ENCODE measurements at regions of chr6 and their contacts with region 1.

Region 1: GRCh38 chr6:132512638-132513632 is at the start of gene STX7:
- DNase-seq: peak; percentile 67 to 91 (median 85)
- ATAC-seq: peak; percentile 93
- H3K4me3 ChIP-seq: peak within 1 kb of the TSS; percentile 75 to 90
- H3K4me3 Mint-ChIP-seq: peak within 1 kb of the TSS; percentile 97
- H3K27ac ChIP-seq: peak within 1 kb of the TSS; percentile 43 to 57
- H3K27ac Mint-ChIP-seq: peak within 1 kb of the TSS; percentile 91
- H3K4me1 ChIP-seq: peaks cover 8% of the 10 kb centered on the region
- H3K4me1 Mint-ChIP-seq: peaks cover 35% of the 10 kb centered on the region
- H3K27me3 ChIP-seq: no peaks in the 10 kb centered on the region
- H3K27me3 Mint-ChIP-seq: no peaks in the 10 kb centered on the region
- CTCF ChIP-seq: no peak
- total RNA-seq, gene STX7: 5.4 to 5.5 TPM

Region 2: GRCh38 chr6:132495604-132496079 is 17.3 kb before region 1 on chr6:
- CTCF ChIA-PET with region 1: no interaction called
- POLR2A ChIA-PET with region 1: interaction called, 3 read pairs
- intact Hi-C with region 1: loop called in 1 of 2 experiments (anchors 1 kb)
- DNase-seq: no peak
- ATAC-seq: no peak
- H3K4me3 ChIP-seq: no peak overlapping the region
- H3K4me3 Mint-ChIP-seq: no peak overlapping the region
- H3K27ac ChIP-seq: peak overlapping the region in 1 of 2 experiments; percentile 21
- H3K27ac Mint-ChIP-seq: no peak overlapping the region
- H3K4me1 ChIP-seq: peaks cover 1% of the 10 kb centered on the region
- H3K4me1 Mint-ChIP-seq: peaks cover 41% of the 10 kb centered on the region
- H3K27me3 ChIP-seq: no peaks in the 10 kb centered on the region
- H3K27me3 Mint-ChIP-seq: no peaks in the 10 kb centered on the region
- CTCF ChIP-seq: no peak

Region 3: DNA sequence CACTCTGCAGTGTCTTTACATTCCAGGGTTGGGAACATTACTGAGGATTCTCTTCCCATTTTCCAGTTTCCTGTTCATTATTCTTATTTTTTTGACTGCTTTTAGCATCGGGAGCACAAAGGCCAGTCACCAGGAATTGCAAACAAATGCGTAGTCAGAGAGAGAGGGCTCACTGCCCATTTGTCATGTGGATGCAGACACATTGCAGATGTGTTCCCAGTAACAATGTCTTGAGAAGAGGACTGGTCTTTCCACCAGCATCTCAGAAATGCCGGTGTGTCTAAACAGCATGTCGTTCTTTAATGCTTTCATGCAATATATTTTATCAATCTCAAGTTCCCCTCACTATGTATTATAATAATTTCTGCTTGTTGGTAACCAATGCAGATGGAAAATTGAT is 56.2 kb after region 1 on chr6:
- CTCF ChIA-PET with region 1: no interaction called
- POLR2A ChIA-PET with region 1: no interaction called
- intact Hi-C with region 1: no loop called
- DNase-seq: no peak
- ATAC-seq: no peak
- H3K4me3 ChIP-seq: no peak overlapping the region
- H3K4me3 Mint-ChIP-seq: no peak overlapping the region
- H3K27ac ChIP-seq: no peak overlapping the region
- H3K27ac Mint-ChIP-seq: no peak overlapping the region
- H3K4me1 ChIP-seq: no peaks in the 10 kb centered on the region
- H3K4me1 Mint-ChIP-seq: no peaks in the 10 kb centered on the region
- H3K27me3 ChIP-seq: no peaks in the 10 kb centered on the region
- H3K27me3 Mint-ChIP-seq: peaks cover 26% of the 10 kb centered on the region
- CTCF ChIP-seq: no peak

Region 4: DNA sequence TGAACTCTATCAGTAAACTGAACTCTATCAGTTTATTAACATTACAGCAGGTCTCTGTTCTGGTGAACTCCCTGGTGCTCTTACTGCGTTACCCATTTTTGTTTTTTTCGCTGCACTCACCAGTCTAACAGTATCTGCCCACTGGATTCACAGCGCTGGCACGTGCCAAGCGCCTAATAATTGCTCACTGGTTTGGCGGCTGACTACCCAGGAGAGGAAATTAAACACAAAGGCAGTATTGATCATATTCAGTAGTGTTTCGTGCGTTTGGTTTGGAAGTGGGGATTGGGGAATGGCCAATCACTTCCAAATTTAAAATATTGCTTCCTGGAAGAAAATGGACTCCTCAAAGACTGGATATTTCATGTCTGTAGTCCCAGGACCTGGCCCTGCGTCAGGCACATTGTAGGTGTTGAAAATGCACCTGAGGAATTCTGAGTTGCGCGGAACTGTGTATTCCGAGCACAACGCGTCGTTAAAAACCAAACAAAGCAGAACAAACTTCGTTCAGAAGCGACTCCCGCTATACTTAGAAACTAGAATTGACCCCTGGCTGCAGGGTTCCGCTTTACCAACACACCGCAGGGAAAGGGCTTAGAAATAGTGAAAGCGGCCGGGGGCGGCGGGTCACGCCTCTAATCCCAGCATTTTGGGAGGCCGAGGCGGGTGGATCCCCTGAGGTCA is 300.4 kb after region 1 on chr6:
- CTCF ChIA-PET with region 1: no interaction called
- POLR2A ChIA-PET with region 1: interaction called, 12 read pairs
- intact Hi-C with region 1: loop called (anchors 1 to 5 kb)
- DNase-seq: peak in 8 of 9 experiments; percentile 23 to 81 (median 40)
- ATAC-seq: peak; percentile 17
- H3K4me3 ChIP-seq: peak overlapping the region; percentile 83 to 87
- H3K4me3 Mint-ChIP-seq: peak overlapping the region; percentile 97
- H3K27ac ChIP-seq: peak overlapping the region; percentile 69 to 87
- H3K27ac Mint-ChIP-seq: peak overlapping the region; percentile 99
- H3K4me1 ChIP-seq: peaks cover 25% of the 10 kb centered on the region
- H3K4me1 Mint-ChIP-seq: peaks cover 49% of the 10 kb centered on the region
- H3K27me3 ChIP-seq: no peaks in the 10 kb centered on the region
- H3K27me3 Mint-ChIP-seq: no peaks in the 10 kb centered on the region
- CTCF ChIP-seq: no peak

Measured in CD8-positive, alpha-beta T cell (primary cell).